GM18951 (cell line): ENCODE measurements at regions of chr13 and their contacts with region 1.

Region 1: GRCh38 chr13:31236211-31236786 is 36.5 kb downstream of the B3GLCT start:
- POLR2A ChIP-seq: no peak

Region 2: DNA sequence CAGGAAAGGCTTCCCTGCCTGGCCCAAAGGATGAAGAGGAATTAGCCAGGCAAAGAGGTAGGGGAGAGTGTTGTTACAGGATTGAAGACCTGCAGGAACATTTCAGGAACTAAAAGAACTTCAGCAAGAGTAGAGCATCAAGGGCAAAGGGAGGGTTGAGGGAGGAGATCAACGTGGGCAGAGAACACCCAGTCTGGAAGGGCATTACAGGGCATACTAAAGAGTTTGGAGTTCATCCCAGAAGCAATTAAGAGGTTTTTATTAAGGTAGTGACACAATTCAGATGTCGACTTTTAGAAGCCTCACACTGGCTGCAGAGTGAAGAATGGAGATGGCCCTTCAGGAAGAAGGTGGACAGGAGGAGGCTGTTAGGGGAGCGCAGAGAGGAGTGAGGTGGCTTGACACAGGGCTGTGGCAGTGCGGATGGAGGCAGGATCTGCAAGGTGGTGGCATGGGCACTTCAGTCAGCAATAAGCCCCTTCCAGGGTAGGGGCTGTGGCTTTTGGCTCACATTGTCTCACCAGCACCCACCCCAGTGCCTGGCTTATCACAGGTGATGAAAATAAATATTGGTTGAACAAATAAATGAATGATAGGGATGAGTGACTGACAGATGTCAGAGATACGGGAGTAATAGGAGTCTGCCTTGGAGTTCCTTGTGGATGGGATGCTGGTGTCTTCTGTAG is 278.9 kb before region 1 on chr13:
- in situ Hi-C with region 1: no loop called
- POLR2A ChIP-seq: no peak

Region 3: GRCh38 chr13:31424117-31424729 is 187.9 kb after region 1 on chr13:
- in situ Hi-C with region 1: loop called (anchors 10 kb)
- POLR2A ChIP-seq: no peak

Region 4: DNA sequence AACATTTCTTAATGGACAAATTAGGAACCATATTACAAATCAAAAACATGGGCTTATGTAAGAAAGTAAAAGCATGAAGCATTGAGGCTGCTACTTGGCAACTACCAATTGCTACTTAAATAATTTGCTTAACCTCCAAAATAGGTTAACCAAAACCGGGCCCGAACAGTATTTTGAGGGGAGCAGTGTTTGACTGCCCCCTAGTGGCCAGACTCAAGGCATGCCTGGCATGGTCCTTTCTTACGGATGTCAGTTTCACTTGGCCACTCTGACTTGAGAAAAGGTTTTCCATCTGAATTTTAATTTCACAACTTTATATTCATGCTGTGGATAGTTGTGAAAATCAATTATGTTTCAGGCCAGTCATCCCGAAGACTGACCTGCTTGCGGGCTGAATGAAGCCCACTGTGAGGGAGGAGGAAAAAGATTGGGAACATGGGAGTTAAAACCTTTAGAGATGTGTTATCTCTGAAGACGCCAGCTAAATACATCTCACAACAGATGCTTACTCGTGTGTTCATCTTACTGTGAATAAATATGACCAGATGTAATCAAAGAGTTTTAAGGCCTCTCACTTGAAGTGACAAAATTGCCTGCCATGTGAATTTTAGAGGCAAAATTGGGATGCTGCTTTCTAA is 505.9 kb after region 1 on chr13:
- in situ Hi-C with region 1: loop called (anchors 25 kb)
- POLR2A ChIP-seq: no peak